HEK293T (cell line): ENCODE measurements at regions of chr1 and their contacts with region 1.

Region 1: DNA sequence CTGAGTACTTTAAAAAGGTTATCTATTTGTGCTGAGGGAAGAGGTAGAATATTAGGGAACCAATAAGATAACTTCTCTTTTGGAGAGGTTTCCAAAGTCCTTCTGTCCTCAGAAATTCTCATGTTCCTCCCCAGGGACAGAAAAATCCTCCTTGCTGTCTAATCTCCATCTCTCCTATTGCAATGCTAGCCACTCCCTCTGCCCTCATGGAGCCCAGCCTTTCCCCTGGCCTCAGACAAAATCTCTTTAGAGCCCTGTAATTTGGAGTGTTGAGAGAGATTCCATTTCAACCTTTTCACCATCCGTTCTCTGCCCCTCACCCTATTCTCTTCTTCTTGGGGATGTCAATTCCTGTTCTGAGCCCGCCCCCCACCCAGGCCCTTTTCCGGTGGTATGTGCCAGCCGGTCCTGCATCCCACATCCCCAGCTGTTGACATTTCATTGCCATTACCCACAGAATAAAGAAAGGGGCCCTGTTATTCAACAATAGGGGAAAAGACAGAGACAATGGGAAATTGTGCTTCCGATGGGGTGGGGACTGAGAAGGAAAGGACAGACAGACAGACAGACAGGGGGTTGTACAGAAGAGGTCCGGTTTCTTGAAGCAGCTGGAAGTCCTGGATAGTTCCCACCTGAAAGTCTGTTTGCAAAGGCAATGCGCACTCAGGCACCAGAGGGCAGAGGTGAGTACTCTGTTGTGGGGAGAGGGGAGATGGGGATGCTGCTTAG is at the start of gene HAPLN2:
- DNase-seq: peak; percentile 66

Region 2: DNA sequence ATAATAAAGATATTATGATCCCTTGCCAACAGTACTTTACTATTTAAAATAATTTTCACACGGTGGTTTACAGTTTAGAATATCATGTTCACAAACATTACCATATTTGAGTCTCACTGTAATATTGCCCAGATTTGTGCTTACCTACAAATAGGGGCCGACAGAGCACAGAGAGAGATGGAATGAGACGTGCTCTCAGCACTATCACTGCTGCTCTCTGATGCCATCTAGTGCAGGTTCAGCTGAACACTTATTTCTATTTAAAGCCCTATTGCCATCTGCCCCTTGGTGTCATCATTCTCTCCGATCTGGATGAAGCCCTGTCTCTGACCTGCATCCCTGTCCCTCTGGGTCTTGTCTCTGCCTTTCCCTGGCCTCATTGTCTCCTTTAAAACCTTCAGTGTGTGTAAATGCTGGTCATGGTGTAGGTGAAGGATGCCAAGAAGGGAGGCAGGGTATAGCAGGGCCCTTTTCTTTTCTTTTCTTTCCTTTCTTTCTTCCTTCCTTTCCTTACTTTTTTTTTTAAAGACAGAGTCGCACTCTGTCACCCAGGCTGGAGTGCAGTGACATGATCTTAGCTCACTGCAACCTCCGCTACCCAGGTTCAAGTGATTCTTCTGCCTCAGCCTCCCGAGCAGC is 10.9 kb before region 1 on chr1:
- CTCF ChIA-PET with region 1: interaction called, 13 read pairs
- POLR2A ChIA-PET with region 1: interaction called, 6 read pairs
- DNase-seq: peak; percentile 78

Region 3: DNA sequence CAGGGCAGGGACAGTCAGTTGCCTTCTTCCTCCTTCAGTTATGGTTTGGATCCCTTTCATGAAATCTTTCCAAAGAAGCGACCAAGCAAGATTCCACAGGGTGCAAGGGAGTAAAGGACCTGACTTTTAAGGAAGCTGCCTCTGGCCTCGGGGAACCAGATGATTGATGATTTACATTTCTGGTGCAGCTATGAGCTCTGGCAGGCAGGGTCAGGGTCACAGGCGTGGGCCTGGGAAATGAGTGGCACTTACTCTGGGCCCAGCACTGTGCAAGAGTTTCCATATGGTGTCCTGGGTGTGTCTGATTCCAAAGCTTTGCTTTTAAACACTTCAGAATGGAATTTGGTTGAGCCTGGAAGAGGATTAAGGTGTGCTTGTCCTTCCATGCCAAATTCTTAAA is 93.6 kb after region 1 on chr1:
- CTCF ChIA-PET with region 1: no interaction called
- POLR2A ChIA-PET with region 1: no interaction called
- DNase-seq: no peak

Region 4: GRCh38 chr1:156833603-156834002 is 214.6 kb after region 1 on chr1:
- CTCF ChIA-PET with region 1: no interaction called
- POLR2A ChIA-PET with region 1: no interaction called
- DNase-seq: no peak